ENCODE measurements at regions of chr7 and their contacts with region 1.

Region 1: GRCh38 chr7:144818511-144818910 is 17.3 kb downstream of the TPK1 start:
- DNase-seq: peak; percentile 66
- H3K4me3 Mint-ChIP-seq: no peak overlapping the region
- H3K27ac Mint-ChIP-seq: peak overlapping the region; percentile 90
- H3K4me1 Mint-ChIP-seq: peaks cover 68% of the 10 kb centered on the region
- H3K27me3 Mint-ChIP-seq: no peaks in the 10 kb centered on the region

Region 2: GRCh38 chr7:144786522-144786921 is 32.0 kb before region 1 on chr7:
- CTCF ChIA-PET with region 1: interaction called, 8 read pairs
- POLR2A ChIA-PET with region 1: no interaction called
- intact Hi-C with region 1: loop called (anchors 5 kb)
- DNase-seq: no peak
- H3K4me3 Mint-ChIP-seq: no peak overlapping the region
- H3K27ac Mint-ChIP-seq: no peak overlapping the region
- H3K4me1 Mint-ChIP-seq: peaks cover 25% of the 10 kb centered on the region
- H3K27me3 Mint-ChIP-seq: no peaks in the 10 kb centered on the region

Region 3: DNA sequence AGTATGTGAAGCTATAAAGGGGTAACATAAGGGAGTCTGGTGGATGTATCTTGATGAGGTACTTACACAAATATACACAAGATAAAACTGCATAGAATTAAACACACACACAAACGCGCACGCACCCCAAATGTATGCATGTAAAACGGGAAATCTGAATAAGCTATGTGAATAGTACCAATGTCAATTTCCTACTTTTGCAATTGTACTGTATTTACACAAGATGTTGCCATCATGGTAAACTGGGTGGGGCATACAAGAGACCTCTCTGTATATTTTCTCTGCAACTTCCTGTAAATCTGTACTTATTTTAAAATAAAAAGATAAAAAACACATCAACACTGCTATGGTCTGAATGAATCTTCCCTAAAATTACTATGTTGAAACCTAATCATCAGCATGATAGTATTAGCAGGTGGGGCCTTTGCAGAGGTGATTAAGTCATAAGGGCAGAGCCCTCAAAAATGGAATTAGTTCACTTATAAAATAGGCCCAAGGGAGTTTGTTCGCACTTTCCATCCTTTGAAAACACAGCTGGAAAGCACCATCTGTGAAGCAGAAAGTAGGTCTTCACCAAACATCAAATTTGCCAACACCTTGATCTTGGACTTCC is 12.8 kb before region 1 on chr7:
- CTCF ChIA-PET with region 1: interaction called, 3 read pairs
- POLR2A ChIA-PET with region 1: interaction called, 4 read pairs
- intact Hi-C with region 1: loop called (anchors 1 kb)
- DNase-seq: no peak
- H3K4me3 Mint-ChIP-seq: no peak overlapping the region
- H3K27ac Mint-ChIP-seq: no peak overlapping the region
- H3K4me1 Mint-ChIP-seq: peaks cover 51% of the 10 kb centered on the region
- H3K27me3 Mint-ChIP-seq: no peaks in the 10 kb centered on the region

Region 4: GRCh38 chr7:144842377-144842851 is 23.9 kb after region 1 on chr7:
- CTCF ChIA-PET with region 1: no interaction called
- POLR2A ChIA-PET with region 1: interaction called, 3 read pairs
- intact Hi-C with region 1: loop called (anchors 1 kb)
- DNase-seq: peak; percentile 69
- H3K4me3 Mint-ChIP-seq: peak overlapping the region; percentile 50
- H3K27ac Mint-ChIP-seq: peak overlapping the region; percentile 90
- H3K4me1 Mint-ChIP-seq: peaks cover 22% of the 10 kb centered on the region
- H3K27me3 Mint-ChIP-seq: no peaks in the 10 kb centered on the region

Region 5: GRCh38 chr7:144892761-144893160 is 74.2 kb after region 1 on chr7:
- CTCF ChIA-PET with region 1: no interaction called
- POLR2A ChIA-PET with region 1: no interaction called
- intact Hi-C with region 1: no loop called
- DNase-seq: no peak
- H3K4me3 Mint-ChIP-seq: no peak overlapping the region
- H3K27ac Mint-ChIP-seq: no peak overlapping the region
- H3K4me1 Mint-ChIP-seq: no peaks in the 10 kb centered on the region
- H3K27me3 Mint-ChIP-seq: no peaks in the 10 kb centered on the region

Measured in activated CD4-positive, alpha-beta memory T cell treated with anti-CD3 and anti-CD28 coated beads for 36 hours (primary cell).